IMR-90 (cell line): ENCODE measurements at regions of chr13 and their contacts with region 1.

Region 1: GRCh38 chr13:75876360-75877050 is 240.4 kb downstream of the LMO7 start:
- DNase-seq: peak; percentile 73
- ATAC-seq: peak; percentile 81
- H3K4me3 ChIP-seq: no peak overlapping the region
- H3K27ac ChIP-seq: no peak overlapping the region; the same call in 1 of the 2 replicates
- H3K4me1 ChIP-seq: peaks cover 5% of the 10 kb centered on the region
- H3K27me3 ChIP-seq: peaks cover 4% of the 10 kb centered on the region
- CTCF ChIP-seq: peak; percentile 92
- POLR2A ChIP-seq: no peak
- RAD21 ChIP-seq: peak; percentile 93

Region 2: DNA sequence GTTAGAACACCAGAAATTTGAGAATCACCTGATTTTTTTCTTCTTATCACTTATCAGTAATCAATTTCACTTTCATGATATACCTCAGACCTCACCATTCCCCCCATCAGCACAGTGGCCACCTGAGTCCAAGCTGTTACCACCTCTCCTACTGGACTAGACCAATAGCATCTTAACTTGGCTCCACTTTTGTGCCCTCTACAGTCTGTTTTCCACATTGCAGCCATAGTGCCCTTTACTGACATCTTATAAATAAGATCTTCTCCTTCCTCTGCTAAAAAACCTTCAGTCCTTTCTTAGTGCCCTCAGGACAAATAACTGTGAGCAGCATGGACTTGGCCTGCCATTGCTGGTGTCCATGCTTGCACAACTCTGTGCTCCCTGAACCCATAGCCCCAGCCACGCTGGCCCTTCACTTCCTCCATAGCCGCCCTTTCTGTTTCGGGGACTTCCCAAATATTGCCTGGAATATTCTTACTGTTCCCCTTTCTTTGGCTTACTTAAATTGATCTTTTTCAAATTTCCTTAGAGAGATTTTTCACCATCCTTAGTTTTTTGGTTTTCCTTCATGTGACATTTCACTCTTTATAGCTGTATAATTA is 140.4 kb after region 1 on chr13:
- CTCF ChIA-PET with region 1: no interaction called
- POLR2A ChIA-PET with region 1: no interaction called
- dilution Hi-C with region 1: no loop called
- in situ Hi-C with region 1: no loop called
- intact Hi-C with region 1: loop called (anchors 5 kb)
- DNase-seq: peak; percentile 23
- ATAC-seq: no peak
- H3K4me3 ChIP-seq: no peak overlapping the region
- H3K27ac ChIP-seq: no peak overlapping the region
- H3K4me1 ChIP-seq: peaks cover 6% of the 10 kb centered on the region
- H3K27me3 ChIP-seq: no peaks in the 10 kb centered on the region
- CTCF ChIP-seq: peak; percentile 42
- POLR2A ChIP-seq: no peak
- RAD21 ChIP-seq: peak; percentile 26; the same call in 1 of the 2 replicates

Region 3: GRCh38 chr13:76286178-76286577 is 409.7 kb after region 1 on chr13:
- CTCF ChIA-PET with region 1: no interaction called
- POLR2A ChIA-PET with region 1: no interaction called
- dilution Hi-C with region 1: no loop called
- in situ Hi-C with region 1: no loop called
- intact Hi-C with region 1: loop called (anchors 5 kb)
- DNase-seq: peak; percentile 50
- ATAC-seq: peak; percentile 73
- H3K4me3 ChIP-seq: no peak overlapping the region
- H3K27ac ChIP-seq: no peak overlapping the region
- H3K4me1 ChIP-seq: peaks cover 3% of the 10 kb centered on the region
- H3K27me3 ChIP-seq: no peaks in the 10 kb centered on the region
- CTCF ChIP-seq: no peak
- POLR2A ChIP-seq: no peak
- RAD21 ChIP-seq: no peak

Region 4: GRCh38 chr13:76383676-76384461 is 507.4 kb after region 1 on chr13:
- CTCF ChIA-PET with region 1: no interaction called
- POLR2A ChIA-PET with region 1: no interaction called
- dilution Hi-C with region 1: no loop called
- in situ Hi-C with region 1: loop called (anchors 5 kb)
- intact Hi-C with region 1: loop called (anchors 1 kb)
- DNase-seq: peak; percentile 94
- ATAC-seq: peak; percentile 95
- H3K4me3 ChIP-seq: no peak overlapping the region
- H3K27ac ChIP-seq: peak overlapping the region; percentile 58; the same call in 1 of the 2 replicates
- H3K4me1 ChIP-seq: peaks cover 4% of the 10 kb centered on the region; the same call in 1 of the 2 replicates
- H3K27me3 ChIP-seq: peaks cover 20% of the 10 kb centered on the region
- CTCF ChIP-seq: no peak
- POLR2A ChIP-seq: no peak
- RAD21 ChIP-seq: no peak

Region 5: DNA sequence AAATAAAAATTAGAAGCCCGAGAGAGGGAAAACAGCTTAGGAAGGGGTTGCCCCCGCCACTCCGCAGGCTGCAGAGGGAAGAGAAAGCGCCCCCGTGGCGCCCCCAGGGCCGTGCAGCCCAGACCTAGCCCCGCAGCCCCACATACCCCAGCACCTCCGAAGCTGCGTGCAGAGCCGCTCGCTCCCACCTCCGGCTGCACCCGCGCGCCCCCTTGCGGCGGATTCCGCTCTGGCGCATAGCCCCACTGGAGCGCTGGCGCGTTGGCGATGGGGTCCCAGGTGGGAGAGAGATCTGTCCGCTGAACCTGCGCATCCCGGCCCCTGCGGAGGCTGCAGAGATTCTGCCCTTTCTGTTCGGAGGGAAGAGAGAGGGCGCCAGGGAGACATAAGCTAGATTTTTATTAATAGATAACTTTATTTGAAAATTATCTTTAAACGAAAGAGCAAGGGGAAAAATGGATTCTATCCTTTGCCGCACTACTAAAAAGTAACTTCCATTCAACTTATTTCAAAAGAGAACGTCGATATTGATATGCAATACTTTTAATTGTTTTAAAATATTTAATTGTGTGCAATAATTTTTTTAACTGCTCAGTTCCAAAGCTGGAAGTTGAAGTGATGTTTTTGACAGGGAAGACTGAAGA is 1103.7 kb after region 1 on chr13:
- CTCF ChIA-PET with region 1: no interaction called
- POLR2A ChIA-PET with region 1: no interaction called
- dilution Hi-C with region 1: no loop called
- in situ Hi-C with region 1: no loop called
- intact Hi-C with region 1: loop called (anchors 10 kb)
- DNase-seq: peak; percentile 24
- ATAC-seq: peak; percentile 100
- H3K4me3 ChIP-seq: peak overlapping the region; percentile 44
- H3K27ac ChIP-seq: no peak overlapping the region
- H3K4me1 ChIP-seq: no peaks in the 10 kb centered on the region
- H3K27me3 ChIP-seq: peaks cover 24% of the 10 kb centered on the region
- CTCF ChIP-seq: peak; percentile 87
- POLR2A ChIP-seq: no peak
- RAD21 ChIP-seq: peak; percentile 66

Region 6: DNA sequence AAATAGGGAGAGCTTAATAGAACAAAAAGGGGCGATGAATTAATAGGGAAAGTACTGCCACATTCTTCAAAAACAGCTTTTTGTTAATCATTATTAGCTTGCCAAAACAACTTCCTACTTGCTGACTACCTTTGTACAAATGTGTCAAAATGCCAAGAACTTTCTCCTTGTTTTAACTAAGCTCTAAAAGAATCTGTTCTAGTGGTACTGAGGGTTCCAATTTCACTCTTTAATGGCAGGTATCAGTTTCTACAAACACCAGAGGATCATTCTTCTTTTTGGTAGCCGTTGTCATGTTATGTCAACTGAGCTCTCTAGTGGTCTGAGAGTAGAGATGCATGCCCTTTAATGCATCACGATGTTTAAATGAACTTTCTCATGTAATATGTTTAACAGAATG is 1179.9 kb after region 1 on chr13:
- CTCF ChIA-PET with region 1: no interaction called
- POLR2A ChIA-PET with region 1: no interaction called
- dilution Hi-C with region 1: no loop called
- in situ Hi-C with region 1: no loop called
- intact Hi-C with region 1: no loop called
- DNase-seq: no peak
- ATAC-seq: no peak
- H3K4me3 ChIP-seq: no peak overlapping the region
- H3K27ac ChIP-seq: no peak overlapping the region
- H3K4me1 ChIP-seq: no peaks in the 10 kb centered on the region
- H3K27me3 ChIP-seq: no peaks in the 10 kb centered on the region
- CTCF ChIP-seq: no peak
- POLR2A ChIP-seq: no peak
- RAD21 ChIP-seq: no peak